Mucosa of descending colon (tissue), 3 donors: ENCODE measurements at regions of chr10 and their contacts with region 1.

Region 1: DNA sequence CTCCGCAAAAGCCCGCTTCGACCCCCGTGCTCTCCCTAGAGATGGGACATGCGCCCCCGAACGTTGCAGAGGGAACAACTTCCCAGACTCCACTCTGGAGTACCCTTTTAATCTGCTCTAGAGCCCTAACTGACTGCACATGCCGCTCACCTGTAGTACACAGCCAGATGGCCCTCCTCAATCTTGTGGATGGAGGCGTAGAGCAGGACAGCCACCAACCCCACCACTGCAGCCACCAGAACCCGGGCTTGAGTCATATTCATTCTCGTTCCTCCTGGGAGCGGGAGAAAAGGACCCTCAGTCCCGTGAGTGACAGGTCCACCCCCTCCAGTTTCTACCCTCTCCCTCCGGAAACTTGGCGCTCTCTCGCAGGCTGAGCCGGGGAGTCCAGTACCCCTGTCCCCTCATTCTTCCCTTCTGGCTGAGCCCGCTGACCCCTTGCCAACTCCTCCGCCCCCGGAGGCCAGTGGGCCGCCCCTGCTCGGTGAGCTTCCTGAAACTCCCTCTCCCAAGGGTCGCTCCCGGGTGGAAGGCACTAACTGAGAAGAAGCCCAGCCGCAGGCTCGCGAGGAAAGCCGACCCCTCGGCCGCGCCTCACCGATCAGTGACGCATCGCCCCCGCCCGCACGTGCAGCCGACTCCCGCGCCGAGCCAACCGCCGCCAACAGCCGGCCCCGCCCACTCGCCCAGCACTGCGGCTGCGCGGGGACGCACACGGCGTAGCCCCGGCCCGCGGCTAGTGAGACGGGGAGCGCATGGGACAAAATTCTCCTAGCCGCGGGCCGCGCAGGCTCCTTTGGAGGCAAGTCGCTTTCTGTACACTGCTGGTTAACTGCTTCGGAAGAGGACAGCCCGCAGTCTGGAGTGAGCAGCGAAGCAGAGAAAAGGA is at the start of gene ERLIN1:
- DNase-seq: peak; percentile 94 to 96 (median 95)
- ATAC-seq: peak; percentile 93
- H3K4me3 ChIP-seq: peak within 1 kb of the TSS; percentile 79
- H3K4me1 ChIP-seq: peaks cover 21% of the 10 kb centered on the region
- CTCF ChIP-seq: no peak
- total RNA-seq, gene ERLIN1: 33.4 to 57.9 (median 48.3) TPM

Region 2: GRCh38 chr10:99938563-99938962 is 247.0 kb before region 1 on chr10:
- intact Hi-C with region 1: loop called in 1 of 2 experiments (anchors 10 kb)
- DNase-seq: no peak
- ATAC-seq: peak; percentile 85
- H3K4me3 ChIP-seq: no peak overlapping the region
- H3K4me1 ChIP-seq: peaks cover 6% of the 10 kb centered on the region
- CTCF ChIP-seq: no peak